Heart right ventricle (tissue), 16 donors: ENCODE measurements at regions of chr7 and their contacts with region 1.

Region 1: DNA sequence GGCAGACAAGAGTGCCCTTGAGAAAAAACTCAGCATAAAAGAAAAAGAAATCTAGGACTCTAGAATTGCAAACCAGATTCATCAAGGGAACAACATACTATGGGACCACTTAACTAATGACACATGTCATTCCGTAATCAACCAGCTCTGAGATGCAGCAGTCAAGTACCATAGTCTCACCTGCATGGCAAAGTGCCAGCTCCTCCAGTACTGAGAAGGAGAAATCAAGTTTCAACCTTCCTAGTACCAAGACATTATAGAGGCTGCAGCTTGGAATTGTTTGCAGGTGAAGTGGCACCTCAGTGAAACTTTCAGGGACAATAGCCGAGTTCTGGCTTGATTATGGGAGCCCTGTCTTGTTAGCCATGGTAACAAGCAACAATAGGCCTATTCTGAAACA is 11.5 kb downstream of the STEAP1 start:
- DNase-seq: no peak
- ATAC-seq: no peak
- H3K4me3 ChIP-seq: no peak overlapping the region
- H3K27ac ChIP-seq: no peak overlapping the region
- H3K4me1 ChIP-seq: no peaks in the 10 kb centered on the region
- H3K27me3 ChIP-seq: no peaks in the 10 kb centered on the region
- CTCF ChIP-seq: no peak

Region 2: DNA sequence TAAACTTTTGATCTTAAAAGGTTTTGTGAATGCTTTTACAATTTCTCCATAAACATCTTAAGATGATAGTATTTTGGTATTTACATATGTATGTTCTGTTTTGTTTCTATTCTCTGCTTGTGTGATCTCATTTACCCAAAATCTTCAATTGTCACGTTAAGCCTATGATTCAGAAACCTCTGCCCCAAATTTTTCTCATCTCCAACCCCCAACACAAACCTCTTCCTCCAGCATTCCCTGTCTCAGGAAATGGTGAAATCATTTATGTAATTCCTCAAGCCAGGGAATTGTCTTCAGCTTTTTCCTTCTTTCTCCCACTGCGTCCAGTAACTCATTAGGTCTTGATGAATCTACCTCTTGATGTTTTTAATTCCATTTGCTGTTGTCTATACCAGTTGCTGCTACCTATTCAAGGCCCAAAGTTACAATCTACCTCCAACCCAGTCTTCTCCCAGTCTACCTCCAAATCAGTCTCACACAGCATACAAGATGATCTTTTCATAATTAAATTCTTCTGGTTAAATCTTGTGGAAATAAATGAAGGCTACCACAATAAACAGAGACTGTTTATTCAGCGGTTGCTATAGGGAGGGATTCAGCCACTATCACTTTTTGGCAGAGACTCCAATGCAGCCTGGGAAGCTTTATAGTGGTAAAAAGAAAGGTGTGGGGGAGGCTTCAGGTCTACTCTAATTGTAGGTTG is 85.0 kb after region 1 on chr7:
- intact Hi-C with region 1: loop called in 1 of 10 experiments (anchors 10 kb)
- DNase-seq: no peak
- ATAC-seq: peak in 1 of 8 donors; percentile 39
- H3K4me3 ChIP-seq: no peak overlapping the region
- H3K27ac ChIP-seq: peak overlapping the region in 1 of 10 donors; percentile 73
- H3K4me1 ChIP-seq: peaks cover 0 to 18% (median 7%) of the 10 kb centered on the region in 9 donors
- H3K27me3 ChIP-seq: peaks cover 0 to 9% (median 0%) of the 10 kb centered on the region in 7 donors
- CTCF ChIP-seq: no peak

Region 3: GRCh38 chr7:90262438-90262837 is 96.7 kb after region 1 on chr7:
- intact Hi-C with region 1: loop called in 3 of 10 experiments (anchors 10 kb)
- DNase-seq: no peak
- ATAC-seq: peak in 1 of 8 donors; percentile 52
- H3K4me3 ChIP-seq: no peak overlapping the region
- H3K27ac ChIP-seq: no peak overlapping the region
- H3K4me1 ChIP-seq: peaks cover 0 to 20% (median 0%) of the 10 kb centered on the region in 9 donors
- H3K27me3 ChIP-seq: no peaks in the 10 kb centered on the region
- CTCF ChIP-seq: peak in 8 of 9 donors; percentile 6 to 62 (median 50)

Region 4: DNA sequence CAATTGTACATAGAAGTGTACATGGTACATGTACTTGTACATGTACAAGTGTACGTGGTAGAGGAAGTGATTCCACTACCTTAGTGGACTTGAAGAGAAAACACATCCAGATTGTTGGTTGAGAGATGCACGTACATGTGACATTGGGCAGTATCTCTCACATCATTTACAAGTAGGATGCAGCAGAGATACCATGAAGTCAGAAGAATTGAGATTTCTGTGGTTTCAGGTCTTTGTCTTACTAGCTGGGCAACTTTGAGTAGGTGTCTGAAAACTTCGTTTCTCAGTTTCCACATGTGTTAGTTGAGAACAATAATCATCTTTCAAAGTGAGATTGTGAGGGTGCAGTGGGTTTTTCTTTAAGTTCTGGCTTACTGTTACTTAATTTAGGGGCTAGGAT is 259.0 kb after region 1 on chr7:
- intact Hi-C with region 1: loop called in 1 of 10 experiments (anchors 10 kb)
- DNase-seq: no peak
- ATAC-seq: no peak
- H3K4me3 ChIP-seq: no peak overlapping the region
- H3K27ac ChIP-seq: no peak overlapping the region
- H3K4me1 ChIP-seq: peaks cover 0 to 14% (median 0%) of the 10 kb centered on the region in 9 donors
- H3K27me3 ChIP-seq: no peaks in the 10 kb centered on the region
- CTCF ChIP-seq: no peak

Region 5: GRCh38 chr7:90430614-90431471 is 265.1 kb after region 1 on chr7:
- intact Hi-C with region 1: loop called in 2 of 10 experiments (anchors 10 kb)
- DNase-seq: no peak
- ATAC-seq: no peak
- H3K4me3 ChIP-seq: no peak overlapping the region
- H3K27ac ChIP-seq: no peak overlapping the region
- H3K4me1 ChIP-seq: no peaks in the 10 kb centered on the region
- H3K27me3 ChIP-seq: no peaks in the 10 kb centered on the region
- CTCF ChIP-seq: no peak